Sigmoid colon (tissue), 7 donors: ENCODE measurements at regions of chr15 and their contacts with region 1.

Region 1: GRCh38 chr15:87672309-87673288 is 583.9 kb downstream of the NTRK3 start:
- DNase-seq: no peak
- H3K4me3 ChIP-seq: no peak overlapping the region
- H3K27ac ChIP-seq: no peak overlapping the region
- H3K4me1 ChIP-seq: no peaks in the 10 kb centered on the region
- H3K27me3 ChIP-seq: no peaks in the 10 kb centered on the region
- CTCF ChIP-seq: peak in 3 of 4 experiments; percentile 21 to 49 (median 46)
- EP300 ChIP-seq: no peak
- POLR2A ChIP-seq: no peak

Region 2: DNA sequence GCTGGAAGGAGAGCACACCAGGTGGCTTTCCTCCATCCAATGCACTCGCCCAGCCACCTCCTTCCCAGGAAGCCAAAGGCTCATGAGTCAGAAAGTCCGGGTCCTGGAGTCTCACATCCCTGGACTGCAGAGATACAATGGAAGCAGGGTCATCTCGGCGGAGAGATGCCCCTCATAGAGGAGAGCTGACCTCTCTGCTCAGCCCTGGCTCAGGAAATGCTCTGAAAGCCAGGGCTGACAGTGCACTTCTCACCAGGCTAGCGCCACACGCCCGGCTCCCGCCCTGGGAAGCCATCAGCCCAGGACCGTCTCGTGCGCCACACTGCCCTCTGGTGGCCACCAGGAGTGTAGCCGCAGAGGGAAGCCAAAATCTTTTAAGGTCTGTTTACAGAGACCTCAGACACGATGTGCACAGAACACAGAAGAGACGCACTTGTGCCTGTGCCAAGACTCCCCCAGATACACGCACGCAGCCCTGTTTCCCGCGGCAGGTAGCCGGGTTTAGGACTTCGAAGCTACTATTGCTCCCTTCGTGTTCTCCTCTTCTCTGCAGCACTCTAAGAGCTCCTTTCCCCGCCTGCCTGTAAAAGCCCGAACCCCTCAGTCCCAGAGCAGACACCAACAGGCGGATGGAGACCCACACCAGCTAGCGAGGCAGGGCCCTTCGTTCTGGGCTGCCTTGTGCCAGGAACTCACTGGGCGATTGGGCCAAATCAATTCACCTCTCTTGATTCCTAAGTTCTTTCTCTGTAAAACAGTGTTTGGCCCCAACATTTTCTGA is 574.3 kb after region 1 on chr15:
- intact Hi-C with region 1: loop called (anchors 5 kb)
- DNase-seq: peak; percentile 85
- H3K4me3 ChIP-seq: peak overlapping the region in 1 of 4 donors; percentile 3
- H3K27ac ChIP-seq: no peak overlapping the region
- H3K4me1 ChIP-seq: peaks cover 0 to 9% (median 8%) of the 10 kb centered on the region in 4 donors
- H3K27me3 ChIP-seq: peaks cover 0 to 24% (median 6%) of the 10 kb centered on the region in 3 donors
- CTCF ChIP-seq: peak; percentile 71 to 96 (median 91)
- EP300 ChIP-seq: no peak
- POLR2A ChIP-seq: no peak